ENCODE measurements at regions of chr10 and their contacts with region 1.

Region 1: GRCh38 chr10:100872034-100872791 is 40.5 kb upstream of the SLF2 start:
- DNase-seq: peak; percentile 86
- ATAC-seq: peak; percentile 88
- H3K4me3 Mint-ChIP-seq: no peak overlapping the region
- H3K27ac Mint-ChIP-seq: no peak overlapping the region
- H3K4me1 Mint-ChIP-seq: peaks cover 20% of the 10 kb centered on the region
- H3K27me3 Mint-ChIP-seq: peaks cover 37% of the 10 kb centered on the region
- CTCF ChIP-seq: peak; percentile 76

Region 2: GRCh38 chr10:100817268-100817839 is 54.9 kb before region 1 on chr10:
- CTCF ChIA-PET with region 1: interaction called, 11 read pairs
- POLR2A ChIA-PET with region 1: no interaction called
- DNase-seq: peak; percentile 72
- ATAC-seq: peak; percentile 97
- H3K4me3 Mint-ChIP-seq: no peak overlapping the region
- H3K27ac Mint-ChIP-seq: no peak overlapping the region
- H3K4me1 Mint-ChIP-seq: peaks cover 24% of the 10 kb centered on the region
- H3K27me3 Mint-ChIP-seq: peaks cover 32% of the 10 kb centered on the region
- CTCF ChIP-seq: 0 out of 2 replicates have a peak, but pooled peaks have one; percentile 18

Region 3: DNA sequence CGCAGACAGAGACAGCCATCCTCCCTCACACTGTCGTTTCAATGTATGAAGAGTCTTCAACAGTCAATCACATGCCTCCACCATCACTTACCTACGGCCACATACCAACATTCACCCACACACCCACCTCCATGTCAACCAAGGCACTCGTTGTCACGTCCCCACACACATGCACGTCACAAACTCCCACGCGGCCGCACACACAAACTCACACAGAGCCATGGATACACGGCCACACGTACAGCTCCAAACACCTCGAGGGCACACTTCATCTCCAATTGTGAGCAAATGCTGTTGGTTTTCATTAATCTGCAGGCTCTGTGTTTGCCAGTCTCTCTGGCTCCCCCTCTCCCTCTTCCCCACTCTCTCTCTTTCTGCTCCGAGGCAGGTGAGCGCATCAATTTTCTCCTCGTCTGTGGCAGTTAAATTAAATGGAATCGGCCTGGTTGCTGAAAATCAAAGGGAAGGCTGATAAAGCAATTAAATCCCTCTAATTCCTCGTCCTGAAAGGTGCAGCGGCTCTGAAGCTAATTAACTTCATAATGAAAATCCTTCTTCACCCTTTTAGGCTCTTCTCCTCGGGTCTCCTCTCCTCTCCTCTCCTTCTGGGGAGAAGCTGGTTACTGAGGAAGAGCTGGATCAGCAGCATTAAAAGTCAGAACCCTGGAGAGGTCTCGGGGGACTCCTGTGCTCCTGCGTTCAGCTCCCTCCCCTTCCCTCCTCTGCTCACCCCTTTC is 13.3 kb before region 1 on chr10:
- CTCF ChIA-PET with region 1: interaction called, 11 read pairs
- POLR2A ChIA-PET with region 1: no interaction called
- DNase-seq: no peak
- ATAC-seq: no peak
- H3K4me3 Mint-ChIP-seq: no peak overlapping the region
- H3K27ac Mint-ChIP-seq: no peak overlapping the region
- H3K4me1 Mint-ChIP-seq: no peaks in the 10 kb centered on the region
- H3K27me3 Mint-ChIP-seq: peaks cover 67% of the 10 kb centered on the region
- CTCF ChIP-seq: no peak

Region 4: GRCh38 chr10:100888796-100889356 is 16.7 kb after region 1 on chr10:
- CTCF ChIA-PET with region 1: interaction called, 73 read pairs
- POLR2A ChIA-PET with region 1: no interaction called
- DNase-seq: no peak
- ATAC-seq: peak; percentile 27; the same call in 1 of the 2 replicates
- H3K4me3 Mint-ChIP-seq: no peak overlapping the region
- H3K27ac Mint-ChIP-seq: no peak overlapping the region
- H3K4me1 Mint-ChIP-seq: peaks cover 14% of the 10 kb centered on the region
- H3K27me3 Mint-ChIP-seq: peaks cover 6% of the 10 kb centered on the region; the same call in 1 of the 2 replicates
- CTCF ChIP-seq: no peak

Region 5: GRCh38 chr10:100912605-100913469 is 40.6 kb after region 1 on chr10 and contains the start of gene SLF2:
- CTCF ChIA-PET with region 1: no interaction called
- POLR2A ChIA-PET with region 1: no interaction called
- DNase-seq: peak; percentile 96
- ATAC-seq: peak; percentile 97
- H3K4me3 Mint-ChIP-seq: peak within 1 kb of the TSS; percentile 96
- H3K27ac Mint-ChIP-seq: peak within 1 kb of the TSS; percentile 96
- H3K4me1 Mint-ChIP-seq: peaks cover 32% of the 10 kb centered on the region
- H3K27me3 Mint-ChIP-seq: no peaks in the 10 kb centered on the region
- CTCF ChIP-seq: no peak
- total RNA-seq, gene SLF2: 14.3 to 17.3 TPM (median 16.8 TPM) in 3 replicates